ENCODE measurements at regions of chr2 and their contacts with region 1.

Region 1: DNA sequence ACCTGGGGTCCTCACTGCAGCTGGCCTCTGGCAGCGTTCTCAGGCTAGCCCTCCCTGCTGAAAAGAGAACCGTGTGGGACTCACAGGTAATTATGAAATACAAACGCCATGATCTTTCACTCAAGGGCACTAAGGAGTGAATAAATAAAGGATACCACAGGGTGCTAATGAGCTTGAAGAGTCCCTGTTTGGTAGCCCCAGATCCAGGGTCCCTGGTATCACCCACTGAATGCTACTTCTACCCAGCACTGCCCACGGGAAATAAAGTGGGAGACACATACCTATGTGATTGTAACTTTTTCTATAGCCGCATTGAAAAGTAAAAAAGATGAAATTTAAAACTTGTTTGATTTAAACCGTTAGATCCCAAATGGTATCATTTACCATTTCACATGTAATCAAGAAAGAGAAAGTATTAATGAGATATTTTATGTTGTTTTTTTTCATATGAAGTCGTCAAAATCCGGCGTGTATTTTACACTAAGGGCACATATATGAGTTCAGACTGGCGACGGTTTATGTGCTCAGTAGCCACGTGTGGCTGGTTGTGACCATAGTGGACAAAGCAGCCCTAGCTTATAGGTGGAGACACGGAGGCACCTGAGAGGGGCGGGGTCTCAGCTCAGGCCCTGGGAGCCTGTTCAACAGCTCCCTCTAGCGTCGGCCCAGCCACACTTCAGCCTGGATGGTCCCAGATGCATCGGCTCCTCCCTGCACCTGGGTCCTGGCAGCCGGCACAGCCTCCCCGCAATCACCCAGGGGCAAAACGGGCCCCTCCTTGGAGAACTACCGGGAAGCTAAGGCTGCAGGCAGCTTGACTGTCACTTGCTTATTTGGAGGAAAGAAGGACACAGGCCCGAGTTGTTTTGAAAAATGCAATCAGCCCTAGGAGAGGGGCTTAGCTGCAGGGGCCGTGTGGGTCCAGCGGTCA is 39.2 kb downstream of the ODC1 start:
- DNase-seq: peak; percentile 79
- H3K4me3 ChIP-seq: no peak overlapping the region
- H3K27ac ChIP-seq: no peak overlapping the region
- H3K4me1 ChIP-seq: peaks cover 5% of the 10 kb centered on the region
- H3K27me3 ChIP-seq: no peaks in the 10 kb centered on the region
- CTCF ChIP-seq: peak; percentile 96

Region 2: DNA sequence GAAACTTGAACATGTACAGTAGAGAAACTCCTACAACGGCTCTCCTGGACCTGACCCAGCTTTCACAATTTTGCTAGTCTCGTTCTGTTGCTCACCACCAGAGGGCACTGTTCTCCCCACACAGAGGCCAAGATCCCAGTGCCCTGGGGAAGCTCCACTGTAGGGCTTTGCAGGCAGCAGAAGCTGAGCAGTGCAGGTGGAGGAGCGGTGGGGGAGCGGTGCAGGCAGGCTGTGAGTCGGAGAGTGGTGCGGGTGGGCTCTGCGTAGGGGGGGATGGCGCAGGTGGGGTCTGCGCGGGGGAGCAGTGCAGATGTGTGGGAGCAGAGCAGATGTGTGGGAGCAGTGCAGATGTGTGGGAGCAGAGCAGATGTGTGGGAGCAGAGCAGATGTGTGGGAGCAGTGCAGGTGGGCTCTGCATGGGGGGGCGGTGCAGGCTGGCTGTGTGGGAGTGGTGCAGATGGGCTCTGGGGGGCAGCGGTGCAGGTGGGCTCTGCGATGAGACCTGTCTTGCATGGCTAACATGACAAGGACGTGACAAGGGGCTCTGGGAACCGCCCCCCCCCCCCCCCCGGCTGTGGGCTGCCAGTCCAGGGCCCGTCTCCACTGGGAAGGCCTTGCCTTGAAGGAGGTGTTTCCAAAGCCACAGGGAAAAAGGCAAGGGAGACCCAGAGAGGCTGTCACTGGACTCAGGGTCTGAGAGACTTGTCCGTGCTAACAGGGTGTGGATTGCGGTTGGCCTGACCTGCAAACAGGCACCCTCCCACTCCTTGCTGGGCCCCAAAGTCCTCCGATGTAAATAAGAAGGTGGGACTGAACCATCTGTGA is 336.0 kb before region 1 on chr2:
- CTCF ChIA-PET with region 1: interaction called, 19 read pairs
- POLR2A ChIA-PET with region 1: no interaction called
- intact Hi-C with region 1: no loop called
- DNase-seq: peak; percentile 91
- H3K4me3 ChIP-seq: no peak overlapping the region
- H3K27ac ChIP-seq: no peak overlapping the region
- H3K4me1 ChIP-seq: no peaks in the 10 kb centered on the region
- H3K27me3 ChIP-seq: peaks cover 30% of the 10 kb centered on the region
- CTCF ChIP-seq: peak; percentile 87

Region 3: DNA sequence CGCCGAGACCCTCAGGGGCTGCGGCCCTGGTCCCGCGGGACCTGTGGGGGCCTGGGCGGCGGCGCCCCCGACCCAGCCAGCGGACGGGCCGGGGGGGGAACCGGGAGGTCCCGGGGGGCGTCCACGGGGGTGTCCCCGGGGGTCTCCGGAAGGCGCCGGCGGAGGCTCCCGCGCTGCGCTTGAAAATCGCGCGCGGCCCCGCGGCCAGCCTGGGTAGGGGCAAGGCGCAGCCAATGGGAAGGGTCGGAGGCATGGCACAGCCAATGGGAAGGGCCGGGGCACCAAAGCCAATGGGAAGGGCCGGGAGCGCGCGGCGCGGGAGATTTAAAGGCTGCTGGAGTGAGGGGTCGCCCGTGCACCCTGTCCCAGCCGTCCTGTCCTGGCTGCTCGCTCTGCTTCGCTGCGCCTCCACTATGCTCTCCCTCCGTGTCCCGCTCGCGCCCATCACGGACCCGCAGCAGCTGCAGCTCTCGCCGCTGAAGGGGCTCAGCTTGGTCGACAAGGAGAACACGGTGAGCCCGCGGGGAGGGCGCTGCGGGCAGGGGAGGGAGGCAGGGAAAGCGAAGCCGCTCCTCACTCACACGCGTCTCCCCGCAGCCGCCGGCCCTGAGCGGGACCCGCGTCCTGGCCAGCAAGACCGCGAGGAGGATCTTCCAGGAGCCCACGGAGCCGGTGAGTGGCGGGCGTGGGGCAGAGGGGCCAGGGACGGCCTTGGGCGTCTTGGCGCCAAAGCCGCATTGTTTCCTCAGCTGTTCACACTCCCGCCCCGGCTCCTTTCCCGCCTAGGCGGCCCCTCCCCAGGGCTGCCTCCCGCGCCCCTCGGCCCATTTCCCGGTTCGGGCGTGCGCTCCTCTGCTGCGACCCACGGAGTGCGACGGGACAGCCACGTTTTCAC is 286.3 kb before region 1 on chr2 and contains the start of gene RRM2:
- CTCF ChIA-PET with region 1: interaction called, 42 read pairs
- POLR2A ChIA-PET with region 1: interaction called, 22 read pairs
- intact Hi-C with region 1: loop called (anchors 2 kb)
- DNase-seq: peak; percentile 98
- H3K4me3 ChIP-seq: peak within 1 kb of the TSS; percentile 88
- H3K27ac ChIP-seq: peak within 1 kb of the TSS; percentile 98
- H3K4me1 ChIP-seq: peaks cover 18% of the 10 kb centered on the region
- H3K27me3 ChIP-seq: no peaks in the 10 kb centered on the region
- CTCF ChIP-seq: no peak
- total RNA-seq, gene RRM2: 414 and 486 TPM in 2 replicates

Region 4: GRCh38 chr2:10141736-10142642 is 266.9 kb before region 1 on chr2:
- CTCF ChIA-PET with region 1: no interaction called
- POLR2A ChIA-PET with region 1: no interaction called
- intact Hi-C with region 1: loop called (anchors 1 kb)
- DNase-seq: no peak
- H3K4me3 ChIP-seq: no peak overlapping the region
- H3K27ac ChIP-seq: no peak overlapping the region
- H3K4me1 ChIP-seq: no peaks in the 10 kb centered on the region
- H3K27me3 ChIP-seq: no peaks in the 10 kb centered on the region
- CTCF ChIP-seq: peak; percentile 55

Region 5: DNA sequence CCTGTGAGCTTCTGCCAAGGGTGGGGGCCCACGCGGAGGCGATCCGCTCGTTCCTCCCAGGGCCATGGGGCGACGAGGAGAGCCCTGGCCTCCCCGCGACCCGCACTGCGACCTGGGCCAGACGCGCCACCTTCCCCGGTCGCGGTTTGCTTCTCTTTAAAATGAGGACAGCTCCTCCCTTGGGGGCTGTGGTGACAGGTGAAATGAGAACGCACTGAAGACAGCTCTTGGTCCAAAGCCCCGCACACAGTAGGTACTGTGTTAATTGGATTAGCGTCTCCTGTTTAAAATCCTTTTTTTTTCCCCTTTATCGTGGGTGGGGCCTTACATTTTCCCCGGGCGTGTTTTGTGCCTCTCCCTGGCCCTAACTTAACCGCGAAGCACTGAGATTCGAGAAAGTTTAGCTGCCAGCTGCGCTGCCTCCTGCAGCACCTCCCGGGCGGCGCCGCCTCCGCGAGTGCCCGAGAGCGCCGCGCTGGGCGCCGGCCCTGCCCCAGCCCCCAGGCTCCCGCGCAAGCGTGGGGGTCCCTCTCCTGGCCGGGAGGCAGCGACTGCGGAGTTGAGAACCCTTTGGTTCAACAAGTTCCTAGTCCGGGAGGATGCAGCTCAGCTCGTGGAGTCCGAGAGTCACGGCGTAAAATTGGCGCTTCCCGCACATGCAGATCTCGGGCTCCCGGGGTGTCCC is 105.1 kb before region 1 on chr2:
- CTCF ChIA-PET with region 1: interaction called, 11 read pairs
- POLR2A ChIA-PET with region 1: no interaction called
- intact Hi-C with region 1: no loop called
- DNase-seq: peak; percentile 51
- H3K4me3 ChIP-seq: peak overlapping the region; percentile 67
- H3K27ac ChIP-seq: no peak overlapping the region
- H3K4me1 ChIP-seq: peaks cover 14% of the 10 kb centered on the region
- H3K27me3 ChIP-seq: no peaks in the 10 kb centered on the region
- CTCF ChIP-seq: no peak; the same call in 1 of the 2 replicates

Region 6: GRCh38 chr2:10424051-10424450 is 15.1 kb after region 1 on chr2:
- CTCF ChIA-PET with region 1: interaction called, 11 read pairs
- POLR2A ChIA-PET with region 1: no interaction called
- intact Hi-C with region 1: no loop called
- DNase-seq: peak; percentile 94
- H3K4me3 ChIP-seq: no peak overlapping the region
- H3K27ac ChIP-seq: no peak overlapping the region
- H3K4me1 ChIP-seq: peaks cover 5% of the 10 kb centered on the region
- H3K27me3 ChIP-seq: no peaks in the 10 kb centered on the region
- CTCF ChIP-seq: no peak

Region 7: DNA sequence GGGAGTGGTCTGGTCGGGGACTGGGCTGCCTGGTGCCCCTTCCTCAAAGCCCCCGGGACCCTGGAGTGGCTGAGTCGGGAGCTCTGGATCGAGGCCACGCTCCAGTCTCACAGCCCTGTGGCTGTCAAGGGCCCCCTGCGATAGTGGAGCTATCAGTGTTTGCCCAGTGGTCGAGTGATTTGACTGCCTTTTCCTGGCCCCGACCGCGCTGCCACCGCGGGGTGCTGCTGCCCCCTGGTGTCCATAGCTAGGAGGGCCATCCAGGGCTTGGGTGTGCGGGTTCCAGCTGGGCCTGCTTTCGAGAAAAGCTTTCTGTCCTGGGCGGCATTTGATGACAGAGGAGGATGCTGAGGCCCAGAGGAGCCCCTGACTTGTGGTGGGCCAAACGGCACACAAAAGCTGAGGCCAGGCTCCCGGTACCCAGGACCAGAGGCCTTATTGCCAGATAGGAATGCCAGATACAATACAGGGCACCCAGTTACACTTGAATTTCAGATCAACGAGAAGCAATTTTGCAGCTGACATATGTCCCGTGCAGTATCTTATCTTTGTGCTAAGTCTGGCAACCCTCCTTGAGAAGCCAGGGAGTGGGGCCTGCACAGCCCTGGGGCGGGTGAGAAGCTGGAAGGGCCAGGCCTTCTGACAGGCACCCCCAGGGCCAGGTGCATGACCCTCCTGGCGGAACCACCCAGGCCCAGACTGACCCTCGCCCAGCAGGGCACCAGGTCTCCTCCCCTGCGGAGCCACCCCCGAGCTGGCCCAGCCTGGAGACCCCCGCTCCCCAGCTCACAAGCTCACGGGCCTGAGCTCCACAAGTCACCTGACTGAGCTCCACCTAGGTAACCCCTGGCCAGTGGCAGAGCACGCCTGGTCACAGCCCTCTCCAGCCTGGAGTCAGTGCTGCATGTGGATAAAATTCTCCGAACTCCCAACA is 26.2 kb after region 1 on chr2:
- CTCF ChIA-PET with region 1: interaction called, 19 read pairs
- POLR2A ChIA-PET with region 1: no interaction called
- intact Hi-C with region 1: no loop called
- DNase-seq: peak; percentile 84
- H3K4me3 ChIP-seq: no peak overlapping the region
- H3K27ac ChIP-seq: no peak overlapping the region
- H3K4me1 ChIP-seq: no peaks in the 10 kb centered on the region
- H3K27me3 ChIP-seq: no peaks in the 10 kb centered on the region
- CTCF ChIP-seq: peak; percentile 96

Region 8: GRCh38 chr2:10733575-10733943 is 324.6 kb after region 1 on chr2:
- CTCF ChIA-PET with region 1: no interaction called
- POLR2A ChIA-PET with region 1: no interaction called
- intact Hi-C with region 1: no loop called
- DNase-seq: no peak
- H3K4me3 ChIP-seq: no peak overlapping the region
- H3K27ac ChIP-seq: no peak overlapping the region
- H3K4me1 ChIP-seq: no peaks in the 10 kb centered on the region
- H3K27me3 ChIP-seq: no peaks in the 10 kb centered on the region
- CTCF ChIP-seq: no peak

Region 9: DNA sequence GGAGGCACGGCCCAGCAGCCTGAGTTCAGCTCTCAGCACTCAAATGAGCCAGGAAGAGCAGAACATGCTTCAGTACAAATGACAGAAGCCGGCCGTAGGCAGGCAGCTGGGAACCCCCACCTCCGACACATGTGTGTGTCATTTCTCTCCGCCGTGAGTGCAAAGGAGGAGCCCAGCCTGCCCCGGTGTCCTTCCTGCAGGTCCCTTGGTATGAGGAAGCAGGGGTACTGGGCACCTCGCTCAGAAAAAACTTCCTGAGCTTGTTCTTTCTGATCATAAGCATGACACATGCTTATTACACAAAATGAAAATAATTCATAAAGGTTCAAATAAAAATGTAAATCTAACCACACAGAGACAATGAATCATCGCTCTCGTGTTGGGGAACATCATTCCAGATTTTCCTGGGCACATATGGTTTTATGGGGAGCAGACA is 538.1 kb after region 1 on chr2:
- CTCF ChIA-PET with region 1: no interaction called
- POLR2A ChIA-PET with region 1: no interaction called
- intact Hi-C with region 1: no loop called
- DNase-seq: no peak
- H3K4me3 ChIP-seq: no peak overlapping the region
- H3K27ac ChIP-seq: no peak overlapping the region
- H3K4me1 ChIP-seq: peaks cover 10% of the 10 kb centered on the region
- H3K27me3 ChIP-seq: no peaks in the 10 kb centered on the region
- CTCF ChIP-seq: no peak